Activated CD8-positive, alpha-beta memory T cell treated with anti-CD3 and anti-CD28 coated beads, Interleukin-2, amount 10 ng/mL, durations not matched to agents 7 days and 5 days (primary cell): ENCODE measurements at regions of chr13 and their contacts with region 1.

Region 1: GRCh38 chr13:27826379-27827353 is 34.4 kb downstream of the GSX1 start:
- DNase-seq: peak; percentile 69
- ATAC-seq: peak; percentile 63
- H3K4me3 Mint-ChIP-seq: no peak overlapping the region
- H3K27ac Mint-ChIP-seq: no peak overlapping the region
- H3K4me1 Mint-ChIP-seq: peaks cover 18% of the 10 kb centered on the region
- H3K27me3 Mint-ChIP-seq: peaks cover 87% of the 10 kb centered on the region

Region 2: DNA sequence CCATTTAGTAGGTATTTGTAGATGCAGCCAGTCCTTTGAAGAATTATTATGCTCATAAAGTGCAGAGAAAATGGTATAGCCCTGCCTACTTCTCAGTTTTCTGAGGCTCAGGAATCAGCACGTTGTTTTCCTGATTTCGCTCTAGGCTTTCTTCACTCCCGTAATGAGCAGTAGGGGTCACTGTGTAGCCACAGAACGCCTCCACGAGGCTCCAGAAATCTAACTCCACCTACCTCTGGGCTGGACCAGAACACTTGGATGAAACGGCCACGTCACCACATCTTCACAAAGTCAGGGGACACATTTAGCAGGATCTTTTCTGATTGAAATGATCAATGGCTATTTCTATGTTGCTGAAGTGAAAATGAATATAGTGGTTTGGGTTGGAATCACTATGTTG is 452.0 kb before region 1 on chr13:
- CTCF ChIA-PET with region 1: interaction called, 36 read pairs
- DNase-seq: peak; percentile 73
- ATAC-seq: peak; percentile 88
- H3K4me3 Mint-ChIP-seq: no peak overlapping the region
- H3K27ac Mint-ChIP-seq: no peak overlapping the region
- H3K4me1 Mint-ChIP-seq: peaks cover 15% of the 10 kb centered on the region
- H3K27me3 Mint-ChIP-seq: peaks cover 10% of the 10 kb centered on the region

Region 3: GRCh38 chr13:27533155-27533643 is 293.5 kb before region 1 on chr13:
- CTCF ChIA-PET with region 1: interaction called, 32 read pairs
- DNase-seq: peak; percentile 58
- ATAC-seq: peak; percentile 65
- H3K4me3 Mint-ChIP-seq: no peak overlapping the region
- H3K27ac Mint-ChIP-seq: no peak overlapping the region
- H3K4me1 Mint-ChIP-seq: peaks cover 4% of the 10 kb centered on the region
- H3K27me3 Mint-ChIP-seq: peaks cover 6% of the 10 kb centered on the region

Region 4: GRCh38 chr13:27782151-27782550 is 44.5 kb before region 1 on chr13:
- CTCF ChIA-PET with region 1: interaction called, 12 read pairs
- DNase-seq: no peak
- ATAC-seq: no peak
- H3K4me3 Mint-ChIP-seq: no peak overlapping the region
- H3K27ac Mint-ChIP-seq: no peak overlapping the region
- H3K4me1 Mint-ChIP-seq: no peaks in the 10 kb centered on the region
- H3K27me3 Mint-ChIP-seq: peaks cover 70% of the 10 kb centered on the region

Region 5: GRCh38 chr13:27839809-27840467 is 13.3 kb after region 1 on chr13:
- CTCF ChIA-PET with region 1: interaction called, 19 read pairs
- DNase-seq: no peak
- ATAC-seq: no peak
- H3K4me3 Mint-ChIP-seq: no peak overlapping the region
- H3K27ac Mint-ChIP-seq: no peak overlapping the region
- H3K4me1 Mint-ChIP-seq: no peaks in the 10 kb centered on the region
- H3K27me3 Mint-ChIP-seq: peaks cover 39% of the 10 kb centered on the region

Region 6: DNA sequence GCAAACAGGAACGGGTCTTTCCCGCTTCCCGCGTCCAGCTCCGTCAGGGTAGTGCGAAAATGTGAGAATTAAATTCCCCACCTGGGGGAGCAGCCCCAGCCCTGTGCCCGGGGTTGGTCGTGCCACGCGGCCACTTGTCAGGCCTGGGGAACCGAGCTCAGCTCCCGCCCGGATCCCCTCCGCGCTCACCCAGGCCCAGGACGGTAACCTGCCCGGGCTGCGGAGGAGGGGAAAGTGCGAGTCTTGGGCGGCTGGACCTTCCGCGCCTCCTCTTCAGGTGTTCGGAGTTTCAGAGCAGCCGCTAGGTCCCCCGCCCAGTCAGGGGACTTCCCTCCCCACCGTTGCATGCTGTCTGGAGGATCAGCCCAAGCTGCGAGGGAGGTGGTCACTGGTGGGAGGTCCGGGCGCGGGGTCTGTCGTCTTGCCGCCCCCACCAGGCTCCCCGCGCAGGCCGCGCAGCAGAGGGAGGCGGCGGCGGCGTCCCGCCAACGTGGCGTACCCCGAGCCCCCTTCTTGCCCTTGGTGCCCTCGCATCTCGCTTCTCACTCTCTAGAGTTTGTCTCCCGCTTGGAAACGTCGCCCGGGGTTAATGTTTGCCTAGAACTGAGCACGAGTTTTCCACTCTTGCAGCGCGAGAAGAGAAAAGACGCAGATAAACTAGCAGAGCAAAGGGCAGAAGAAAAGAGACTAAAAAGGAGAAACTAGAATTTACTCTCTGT is 153.8 kb after region 1 on chr13:
- CTCF ChIA-PET with region 1: interaction called, 77 read pairs
- DNase-seq: no peak
- ATAC-seq: no peak
- H3K4me3 Mint-ChIP-seq: no peak overlapping the region
- H3K27ac Mint-ChIP-seq: no peak overlapping the region
- H3K4me1 Mint-ChIP-seq: peaks cover 17% of the 10 kb centered on the region
- H3K27me3 Mint-ChIP-seq: peaks cover 81% of the 10 kb centered on the region

Region 7: DNA sequence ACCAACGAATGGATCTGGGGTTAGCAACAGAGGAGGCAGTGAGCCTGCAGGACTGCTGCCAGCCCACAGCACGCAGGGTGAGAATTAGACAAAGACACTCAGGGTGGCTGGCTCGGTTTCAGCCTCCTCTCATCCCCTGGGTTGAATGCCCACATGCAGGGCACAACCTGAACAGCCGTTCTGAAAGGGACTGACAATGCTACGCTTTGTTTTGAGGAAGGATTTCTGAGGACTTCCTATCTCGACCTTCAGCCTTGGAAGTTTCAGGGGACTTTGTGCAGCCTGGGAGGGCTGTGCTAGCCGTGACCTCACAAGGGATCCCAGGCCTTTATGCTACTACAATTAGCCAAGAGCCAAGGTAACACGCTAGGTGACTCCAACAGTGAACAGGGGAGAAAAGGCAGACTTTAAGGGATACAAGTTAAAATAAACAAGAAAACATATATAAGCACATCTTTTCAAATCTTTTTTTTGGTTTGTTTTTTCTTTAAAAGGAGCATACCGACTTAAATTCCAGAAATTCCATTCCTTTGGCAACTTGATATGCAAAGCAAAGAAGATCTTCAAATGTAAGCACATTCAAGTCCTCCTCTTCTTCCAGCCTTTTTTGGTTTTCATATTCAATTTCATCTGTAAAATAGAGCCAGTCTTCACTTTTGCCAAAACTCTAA is 196.3 kb after region 1 on chr13:
- CTCF ChIA-PET with region 1: no interaction called
- DNase-seq: no peak
- ATAC-seq: no peak
- H3K4me3 Mint-ChIP-seq: no peak overlapping the region
- H3K27ac Mint-ChIP-seq: no peak overlapping the region
- H3K4me1 Mint-ChIP-seq: peaks cover 1% of the 10 kb centered on the region
- H3K27me3 Mint-ChIP-seq: peaks cover 10% of the 10 kb centered on the region